Heart right ventricle (tissue), 16 donors: ENCODE measurements at regions of chr6 and their contacts with region 1.

Region 1: GRCh38 chr6:45922728-45923351 is 92.8 kb downstream of the CLIC5 start:
- DNase-seq: peak; percentile 45 to 54
- ATAC-seq: peak; percentile 58 to 85 (median 76)
- H3K4me3 ChIP-seq: no peak overlapping the region
- H3K27ac ChIP-seq: peak overlapping the region in 3 of 10 donors; percentile 3 to 21 (median 9)
- H3K4me1 ChIP-seq: peaks cover 0 to 47% (median 41%) of the 10 kb centered on the region in 9 donors
- H3K27me3 ChIP-seq: no peaks in the 10 kb centered on the region
- CTCF ChIP-seq: peak; percentile 36 to 75 (median 67)

Region 2: GRCh38 chr6:45075246-45075645 is 847.6 kb before region 1 on chr6:
- intact Hi-C with region 1: no loop called
- DNase-seq: no peak
- ATAC-seq: no peak
- H3K4me3 ChIP-seq: no peak overlapping the region
- H3K27ac ChIP-seq: no peak overlapping the region
- H3K4me1 ChIP-seq: peaks cover 0 to 14% (median 0%) of the 10 kb centered on the region in 9 donors
- H3K27me3 ChIP-seq: no peaks in the 10 kb centered on the region
- CTCF ChIP-seq: no peak

Region 3: DNA sequence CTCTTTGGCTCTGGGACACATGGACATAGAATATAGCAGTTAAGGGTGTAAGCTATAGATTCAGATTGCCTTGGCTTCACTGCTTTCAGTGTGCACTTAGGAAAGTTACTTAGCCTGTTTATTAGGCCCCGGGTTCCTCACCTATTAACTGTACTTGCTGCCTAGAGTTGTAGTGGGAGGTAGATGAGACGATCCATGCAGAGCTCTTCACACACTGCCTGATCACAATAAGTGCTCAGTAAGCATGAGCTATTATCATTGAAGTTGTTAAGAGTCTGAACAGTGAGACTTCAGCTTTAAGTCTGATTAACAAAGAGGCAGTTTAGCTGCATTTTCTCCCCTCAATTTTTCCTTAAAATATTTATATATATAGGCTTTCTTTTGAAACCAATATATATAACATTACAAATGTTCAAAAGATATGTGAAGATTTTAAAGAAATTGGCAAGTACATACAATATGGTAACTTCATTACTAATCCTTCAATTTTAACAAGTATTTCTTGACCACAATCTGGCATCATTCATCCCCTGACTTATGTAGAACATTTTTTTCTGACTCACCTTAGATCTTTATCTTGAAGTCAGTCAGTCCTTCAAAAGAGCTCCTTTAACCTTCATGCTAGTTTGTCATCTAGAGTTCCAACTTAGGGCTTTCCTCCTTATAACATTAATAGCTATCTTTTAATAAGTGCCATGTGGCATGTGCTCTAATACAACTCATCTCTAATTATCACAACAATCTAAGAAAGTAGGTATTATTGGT is 524.6 kb before region 1 on chr6:
- intact Hi-C with region 1: no loop called
- DNase-seq: no peak
- ATAC-seq: no peak
- H3K4me3 ChIP-seq: no peak overlapping the region
- H3K27ac ChIP-seq: no peak overlapping the region
- H3K4me1 ChIP-seq: no peaks in the 10 kb centered on the region
- H3K27me3 ChIP-seq: peaks cover 0 to 5% (median 0%) of the 10 kb centered on the region in 7 donors
- CTCF ChIP-seq: no peak

Region 4: DNA sequence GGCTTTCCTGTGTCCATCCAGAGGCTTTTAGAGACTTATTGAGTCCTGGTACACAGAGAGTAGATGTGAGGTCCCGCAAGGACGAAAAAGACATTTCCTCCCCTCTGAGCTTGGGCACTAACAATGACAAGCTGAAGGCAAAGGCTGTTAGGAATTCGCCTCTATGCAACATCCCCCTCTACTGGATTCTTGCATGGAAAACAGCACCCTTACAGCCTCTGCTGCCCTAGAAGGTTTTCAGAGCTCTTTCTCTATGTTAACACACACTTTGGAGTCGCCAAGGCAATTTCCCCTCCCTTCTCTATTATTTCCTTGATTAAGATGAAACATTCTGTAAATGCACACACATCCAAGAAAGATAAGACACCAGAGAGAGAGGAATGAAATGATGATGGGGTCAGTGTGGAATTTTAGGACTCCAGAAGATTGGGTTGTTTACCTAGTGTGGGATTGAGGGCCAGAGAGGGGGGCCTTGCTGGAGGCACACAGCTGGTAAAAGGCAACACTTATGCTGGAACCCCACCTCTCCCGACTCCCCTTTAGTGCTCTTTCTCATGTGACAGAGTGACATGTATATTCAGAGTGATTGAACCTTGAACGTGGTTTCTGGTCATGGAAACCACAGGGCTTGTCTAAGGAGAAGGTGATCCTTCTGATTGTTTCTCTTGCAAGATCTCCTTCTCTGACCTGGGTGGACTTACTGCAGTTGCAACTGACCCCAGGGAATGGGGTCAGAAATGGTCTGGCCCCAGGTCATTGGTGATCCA is 207.9 kb before region 1 on chr6:
- intact Hi-C with region 1: loop called in 1 of 10 experiments (anchors 5 kb)
- DNase-seq: peak in 1 of 2 donors; percentile 67
- ATAC-seq: peak; percentile 86 to 97 (median 93)
- H3K4me3 ChIP-seq: no peak overlapping the region
- H3K27ac ChIP-seq: no peak overlapping the region
- H3K4me1 ChIP-seq: peaks cover 0 to 16% (median 0%) of the 10 kb centered on the region in 9 donors
- H3K27me3 ChIP-seq: peaks cover 0 to 6% (median 3%) of the 10 kb centered on the region in 7 donors
- CTCF ChIP-seq: peak; percentile 65 to 92 (median 82)

Region 5: GRCh38 chr6:45791211-45792168 is 131.3 kb before region 1 on chr6:
- intact Hi-C with region 1: no loop called
- DNase-seq: no peak
- ATAC-seq: peak in 3 of 8 donors; percentile 11 to 35 (median 24)
- H3K4me3 ChIP-seq: no peak overlapping the region
- H3K27ac ChIP-seq: no peak overlapping the region
- H3K4me1 ChIP-seq: peaks cover 0 to 5% (median 0%) of the 10 kb centered on the region in 9 donors
- H3K27me3 ChIP-seq: no peaks in the 10 kb centered on the region
- CTCF ChIP-seq: no peak

Region 6: GRCh38 chr6:45808917-45809316 is 113.9 kb before region 1 on chr6:
- intact Hi-C with region 1: no loop called
- DNase-seq: no peak
- ATAC-seq: no peak
- H3K4me3 ChIP-seq: no peak overlapping the region
- H3K27ac ChIP-seq: no peak overlapping the region
- H3K4me1 ChIP-seq: peaks cover 0 to 11% (median 3%) of the 10 kb centered on the region in 9 donors
- H3K27me3 ChIP-seq: no peaks in the 10 kb centered on the region
- CTCF ChIP-seq: no peak

Region 7: GRCh38 chr6:46203391-46204177 is 280.7 kb after region 1 on chr6:
- intact Hi-C with region 1: loop called in 1 of 10 experiments (anchors 10 kb)
- DNase-seq: no peak
- ATAC-seq: no peak
- H3K4me3 ChIP-seq: no peak overlapping the region
- H3K27ac ChIP-seq: no peak overlapping the region
- H3K4me1 ChIP-seq: peaks cover 0 to 8% (median 0%) of the 10 kb centered on the region in 9 donors
- H3K27me3 ChIP-seq: no peaks in the 10 kb centered on the region
- CTCF ChIP-seq: no peak